ENCODE measurements at regions of chr17 and their contacts with region 1.

Region 1: GRCh38 chr17:28501421-28502284 is 4.5 kb upstream of the FOXN1 start:
- DNase-seq: no peak
- H3K4me3 ChIP-seq: no peak overlapping the region
- H3K27ac ChIP-seq: no peak overlapping the region
- H3K4me1 ChIP-seq: peaks cover 14% of the 10 kb centered on the region; the same call in 1 of the 2 replicates
- H3K27me3 ChIP-seq: peaks cover 23% of the 10 kb centered on the region
- CTCF ChIP-seq: no peak

Region 2: DNA sequence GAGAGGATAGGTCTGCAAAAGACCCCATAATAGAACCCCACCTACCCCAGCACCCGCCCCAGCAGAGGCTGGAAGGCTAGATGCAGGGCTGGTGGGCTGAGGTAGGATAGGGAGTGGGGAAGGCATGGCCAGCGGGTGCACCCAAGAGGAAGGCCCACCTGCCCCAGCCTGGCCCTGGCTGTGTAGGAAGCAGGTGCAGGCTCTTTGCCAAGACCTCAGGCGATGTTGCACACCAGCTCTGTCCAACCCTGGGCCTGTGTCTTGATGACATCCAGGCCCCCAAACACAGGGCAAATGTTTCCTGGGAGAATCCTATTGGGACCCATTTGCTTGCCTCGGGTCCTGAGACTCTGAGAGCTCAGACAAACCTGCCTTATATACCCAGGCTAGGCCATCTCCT is 38.6 kb after region 1 on chr17:
- CTCF ChIA-PET with region 1: interaction called, 10 read pairs
- POLR2A ChIA-PET with region 1: no interaction called
- intact Hi-C with region 1: no loop called
- DNase-seq: no peak
- H3K4me3 ChIP-seq: no peak overlapping the region
- H3K27ac ChIP-seq: no peak overlapping the region
- H3K4me1 ChIP-seq: no peaks in the 10 kb centered on the region
- H3K27me3 ChIP-seq: 0 out of 2 replicates have a peak, but pooled peaks cover 4% of the 10 kb centered on the region
- CTCF ChIP-seq: no peak